ENCODE measurements at regions of chr4 and their contacts with region 1.

Region 1: GRCh38 chr4:140252742-140253555 is 99.0 kb upstream of the MAML3 start:
- DNase-seq: peak; percentile 36 to 70 (median 48)
- H3K4me3 ChIP-seq: peak overlapping the region; percentile 52 to 77 (median 70)
- H3K4me3 Mint-ChIP-seq: peak overlapping the region; percentile 65 to 80
- H3K27ac ChIP-seq: peak overlapping the region in 1 of 2 donors; percentile 74
- H3K27ac Mint-ChIP-seq: peak overlapping the region in 4 of 7 donors; percentile 20 to 81 (median 42)
- H3K4me1 ChIP-seq: peaks cover 22 to 28% of the 10 kb centered on the region in 2 donors
- H3K4me1 Mint-ChIP-seq: peaks cover 55% of the 10 kb centered on the region
- H3K27me3 ChIP-seq: no peaks in the 10 kb centered on the region
- H3K27me3 Mint-ChIP-seq: peaks cover 0 to 6% (median 2%) of the 10 kb centered on the region in 3 donors
- CTCF ChIP-seq: peak; percentile 98

Region 2: GRCh38 chr4:139674875-139675550 is 577.9 kb before region 1 on chr4:
- intact Hi-C with region 1: loop called in 1 of 2 experiments (anchors 10 kb)
- DNase-seq: peak; percentile 82 to 91 (median 91)
- H3K4me3 ChIP-seq: peak overlapping the region; percentile 1 to 70 (median 43)
- H3K4me3 Mint-ChIP-seq: peak overlapping the region; percentile 66 to 76
- H3K27ac ChIP-seq: peak overlapping the region; percentile 77 to 87
- H3K27ac Mint-ChIP-seq: peak overlapping the region; percentile 90 to 98 (median 97)
- H3K4me1 ChIP-seq: peaks cover 32 to 38% of the 10 kb centered on the region in 2 donors
- H3K4me1 Mint-ChIP-seq: peaks cover 45% of the 10 kb centered on the region
- H3K27me3 ChIP-seq: no peaks in the 10 kb centered on the region
- H3K27me3 Mint-ChIP-seq: no peaks in the 10 kb centered on the region
- CTCF ChIP-seq: no peak

Region 3: DNA sequence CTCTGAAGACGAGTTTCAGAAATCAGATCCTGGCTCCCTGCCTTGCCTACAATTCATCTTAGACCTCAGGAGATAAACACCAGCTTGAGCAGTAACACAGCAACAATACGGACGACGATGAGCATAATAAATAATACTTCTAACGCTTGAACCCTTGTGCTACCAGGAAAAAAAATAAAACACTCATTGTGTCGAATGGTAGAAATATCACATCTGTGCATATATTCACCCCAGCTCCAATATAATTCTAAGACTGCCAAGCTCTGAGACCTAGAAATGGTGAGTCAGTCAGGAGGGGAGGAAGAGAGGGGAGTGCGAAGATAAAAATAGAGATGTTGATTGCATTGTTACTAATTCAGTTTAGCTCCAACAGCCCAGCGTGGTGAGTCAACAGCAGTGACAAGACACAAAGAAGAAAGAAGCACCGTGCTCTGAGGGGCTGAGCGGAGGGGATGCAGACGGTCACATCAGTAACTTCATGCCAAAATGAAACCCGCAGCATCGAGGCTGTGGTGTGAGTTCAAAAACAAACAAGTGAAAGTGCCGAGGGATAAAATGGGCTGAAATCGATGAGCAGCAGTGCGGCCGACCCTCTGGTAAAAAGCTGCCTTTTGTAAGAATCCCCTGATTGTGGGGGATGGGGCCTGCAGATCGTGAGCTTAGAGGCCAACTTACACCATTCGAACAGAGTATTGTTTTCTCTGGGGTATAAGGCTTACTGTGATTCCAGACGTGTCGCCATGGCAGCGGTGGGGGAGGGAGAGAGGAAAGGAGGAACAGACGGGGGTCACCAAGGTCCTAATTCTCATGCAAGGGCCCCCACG is 437.0 kb before region 1 on chr4:
- intact Hi-C with region 1: loop called in 1 of 2 experiments (anchors 5 kb)
- DNase-seq: peak; percentile 75 to 90 (median 88)
- H3K4me3 ChIP-seq: peak overlapping the region; percentile 29 to 70 (median 44)
- H3K4me3 Mint-ChIP-seq: peak overlapping the region; percentile 84 to 93
- H3K27ac ChIP-seq: peak overlapping the region; percentile 26 to 68
- H3K27ac Mint-ChIP-seq: peak overlapping the region; percentile 75 to 97 (median 93)
- H3K4me1 ChIP-seq: peaks cover 44 to 48% of the 10 kb centered on the region in 2 donors
- H3K4me1 Mint-ChIP-seq: peaks cover 64% of the 10 kb centered on the region
- H3K27me3 ChIP-seq: no peaks in the 10 kb centered on the region
- H3K27me3 Mint-ChIP-seq: no peaks in the 10 kb centered on the region
- CTCF ChIP-seq: no peak

Region 4: GRCh38 chr4:140095694-140096482 is 157.1 kb before region 1 on chr4:
- intact Hi-C with region 1: loop called in 1 of 2 experiments (anchors 5 kb)
- DNase-seq: peak; percentile 93 to 98 (median 98)
- H3K4me3 ChIP-seq: peak overlapping the region; percentile 29 to 68 (median 30)
- H3K4me3 Mint-ChIP-seq: peak overlapping the region; percentile 75 to 85
- H3K27ac ChIP-seq: peak overlapping the region; percentile 96 to 97
- H3K27ac Mint-ChIP-seq: peak overlapping the region; percentile 92 to 99 (median 98)
- H3K4me1 ChIP-seq: peaks cover 99 to 100% of the 10 kb centered on the region in 2 donors
- H3K4me1 Mint-ChIP-seq: peaks cover 99% of the 10 kb centered on the region
- H3K27me3 ChIP-seq: no peaks in the 10 kb centered on the region
- H3K27me3 Mint-ChIP-seq: no peaks in the 10 kb centered on the region
- CTCF ChIP-seq: no peak

Region 5: GRCh38 chr4:140137671-140138070 is 115.3 kb before region 1 on chr4:
- intact Hi-C with region 1: no loop called
- DNase-seq: no peak
- H3K4me3 ChIP-seq: no peak overlapping the region
- H3K4me3 Mint-ChIP-seq: no peak overlapping the region
- H3K27ac ChIP-seq: no peak overlapping the region
- H3K27ac Mint-ChIP-seq: peak overlapping the region in 1 of 7 donors; percentile 21
- H3K4me1 ChIP-seq: peaks cover 17 to 34% of the 10 kb centered on the region in 2 donors
- H3K4me1 Mint-ChIP-seq: peaks cover 34% of the 10 kb centered on the region
- H3K27me3 ChIP-seq: no peaks in the 10 kb centered on the region
- H3K27me3 Mint-ChIP-seq: no peaks in the 10 kb centered on the region
- CTCF ChIP-seq: no peak

Region 6: GRCh38 chr4:140237606-140237986 is 15.4 kb before region 1 on chr4:
- intact Hi-C with region 1: no loop called
- DNase-seq: peak; percentile 57 to 73 (median 68)
- H3K4me3 ChIP-seq: peak overlapping the region in 1 of 3 experiments; percentile 62
- H3K4me3 Mint-ChIP-seq: peak overlapping the region; percentile 73 to 85
- H3K27ac ChIP-seq: peak overlapping the region; percentile 66 to 71
- H3K27ac Mint-ChIP-seq: peak overlapping the region; percentile 79 to 93 (median 89)
- H3K4me1 ChIP-seq: peaks cover 32 to 38% of the 10 kb centered on the region in 2 donors
- H3K4me1 Mint-ChIP-seq: peaks cover 52% of the 10 kb centered on the region
- H3K27me3 ChIP-seq: no peaks in the 10 kb centered on the region
- H3K27me3 Mint-ChIP-seq: peaks cover 0 to 3% (median 0%) of the 10 kb centered on the region in 3 donors
- CTCF ChIP-seq: no peak

Region 7: GRCh38 chr4:140286456-140286855 is 33.5 kb after region 1 on chr4:
- intact Hi-C with region 1: no loop called
- DNase-seq: no peak
- H3K4me3 ChIP-seq: no peak overlapping the region
- H3K4me3 Mint-ChIP-seq: no peak overlapping the region
- H3K27ac ChIP-seq: no peak overlapping the region
- H3K27ac Mint-ChIP-seq: no peak overlapping the region
- H3K4me1 ChIP-seq: no peaks in the 10 kb centered on the region
- H3K4me1 Mint-ChIP-seq: no peaks in the 10 kb centered on the region
- H3K27me3 ChIP-seq: no peaks in the 10 kb centered on the region
- H3K27me3 Mint-ChIP-seq: peaks cover 2 to 6% (median 3%) of the 10 kb centered on the region in 3 donors
- CTCF ChIP-seq: no peak